ENCODE measurements at regions of chr13 and their contacts with region 1.

Region 1: DNA sequence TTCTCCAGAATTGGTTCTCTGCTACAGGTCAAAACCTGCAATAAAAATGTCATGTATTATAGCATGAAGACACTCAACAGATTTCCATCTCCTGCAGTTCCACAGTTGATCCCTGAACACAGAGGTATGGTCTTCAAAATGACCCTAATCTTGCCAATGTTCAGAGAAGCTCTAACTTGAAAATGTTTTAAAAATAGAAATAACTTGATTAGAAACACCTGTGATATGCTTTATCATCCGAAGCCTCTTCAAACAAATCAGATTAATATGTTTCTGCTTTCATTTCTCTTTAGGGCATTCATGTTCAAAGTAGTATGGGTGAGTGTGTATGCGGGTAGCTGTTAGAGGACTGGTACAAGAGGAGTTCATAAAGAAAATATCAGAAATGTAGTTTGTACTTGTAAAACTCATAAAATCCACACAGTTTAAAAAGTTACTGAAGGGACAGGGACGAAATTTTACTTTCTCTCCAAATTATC is 60.4 kb downstream of the KCNRG start:
- DNase-seq: peak; percentile 47
- H3K4me3 Mint-ChIP-seq: peak overlapping the region; percentile 97
- H3K27ac Mint-ChIP-seq: peak overlapping the region; percentile 99
- H3K4me1 Mint-ChIP-seq: peaks cover 10% of the 10 kb centered on the region
- H3K27me3 Mint-ChIP-seq: no peaks in the 10 kb centered on the region
- CTCF ChIP-seq: no peak

Region 2: GRCh38 chr13:49669735-49670309 is 405.8 kb before region 1 on chr13:
- CTCF ChIA-PET with region 1: no interaction called
- POLR2A ChIA-PET with region 1: no interaction called
- intact Hi-C with region 1: loop called (anchors 1 kb)
- DNase-seq: peak; percentile 73
- H3K4me3 Mint-ChIP-seq: no peak overlapping the region
- H3K27ac Mint-ChIP-seq: no peak overlapping the region
- H3K4me1 Mint-ChIP-seq: peaks cover 30% of the 10 kb centered on the region
- H3K27me3 Mint-ChIP-seq: no peaks in the 10 kb centered on the region
- CTCF ChIP-seq: peak; percentile 73

Region 3: DNA sequence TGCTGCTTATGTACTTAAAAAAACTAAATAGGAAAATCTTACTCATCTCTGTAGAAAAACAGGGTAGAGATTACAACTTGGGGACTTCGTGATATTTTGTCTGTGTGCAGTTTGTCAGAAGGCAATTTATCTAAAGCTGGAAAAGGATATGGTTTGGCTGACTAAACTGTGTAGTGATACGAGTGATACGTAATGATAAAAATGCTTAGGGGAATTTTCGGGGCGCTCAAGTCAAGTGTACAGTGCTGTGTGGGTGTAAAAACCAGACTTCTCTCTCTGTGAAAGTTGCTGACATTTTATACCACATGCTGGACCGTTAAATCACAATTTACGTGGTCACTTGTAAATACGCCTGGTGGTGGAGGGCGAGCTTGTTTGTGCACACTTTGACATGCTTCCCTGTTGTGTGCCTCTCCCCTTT is 161.2 kb after region 1 on chr13:
- CTCF ChIA-PET with region 1: no interaction called
- POLR2A ChIA-PET with region 1: no interaction called
- intact Hi-C with region 1: no loop called
- DNase-seq: no peak
- H3K4me3 Mint-ChIP-seq: no peak overlapping the region
- H3K27ac Mint-ChIP-seq: no peak overlapping the region
- H3K4me1 Mint-ChIP-seq: no peaks in the 10 kb centered on the region
- H3K27me3 Mint-ChIP-seq: no peaks in the 10 kb centered on the region
- CTCF ChIP-seq: no peak

Measured in MCF 10A (cell line).